ENCODE measurements at regions of chr11 and their contacts with region 1.

Region 1: GRCh38 chr11:119728651-119729580 is at the start of gene NECTIN1:
- DNase-seq: peak; percentile 89
- H3K4me3 ChIP-seq: peak within 1 kb of the TSS; percentile 53 to 68 (median 65)
- H3K27ac ChIP-seq: peak within 1 kb of the TSS; percentile 40
- H3K4me1 ChIP-seq: peaks cover 35% of the 10 kb centered on the region
- H3K27me3 ChIP-seq: no peaks in the 10 kb centered on the region
- CTCF ChIP-seq: peak; percentile 87 to 91
- POLR2A ChIP-seq: peak; percentile 84
- total RNA-seq, gene NECTIN1: 23.6 and 23.9 TPM in 2 replicates

Region 2: GRCh38 chr11:119481021-119481666 is 247.8 kb before region 1 on chr11:
- CTCF ChIA-PET with region 1: interaction called, 11 read pairs
- POLR2A ChIA-PET with region 1: no interaction called
- dilution Hi-C with region 1: no loop called
- intact Hi-C with region 1: loop called (anchors 1 kb)
- DNase-seq: peak; percentile 60
- H3K4me3 ChIP-seq: no peak overlapping the region
- H3K27ac ChIP-seq: no peak overlapping the region
- H3K4me1 ChIP-seq: no peaks in the 10 kb centered on the region
- H3K27me3 ChIP-seq: no peaks in the 10 kb centered on the region
- CTCF ChIP-seq: peak; percentile 96 to 98
- POLR2A ChIP-seq: no peak

Region 3: GRCh38 chr11:119641983-119642745 is 86.8 kb before region 1 on chr11:
- CTCF ChIA-PET with region 1: interaction called, 16 read pairs
- POLR2A ChIA-PET with region 1: interaction called, 3 read pairs
- dilution Hi-C with region 1: no loop called
- intact Hi-C with region 1: loop called (anchors 1 kb)
- DNase-seq: peak; percentile 13
- H3K4me3 ChIP-seq: no peak overlapping the region
- H3K27ac ChIP-seq: no peak overlapping the region
- H3K4me1 ChIP-seq: no peaks in the 10 kb centered on the region
- H3K27me3 ChIP-seq: peaks cover 0 to 2% of the 10 kb centered on the region in 2 experiments
- CTCF ChIP-seq: peak; percentile 59 to 69
- POLR2A ChIP-seq: no peak

Region 4: GRCh38 chr11:119673759-119674336 is 55.1 kb before region 1 on chr11:
- CTCF ChIA-PET with region 1: interaction called, 128 read pairs
- POLR2A ChIA-PET with region 1: interaction called, 5 read pairs
- dilution Hi-C with region 1: no loop called
- intact Hi-C with region 1: loop called (anchors 1 kb)
- DNase-seq: no peak
- H3K4me3 ChIP-seq: no peak overlapping the region
- H3K27ac ChIP-seq: no peak overlapping the region
- H3K4me1 ChIP-seq: peaks cover 26% of the 10 kb centered on the region
- H3K27me3 ChIP-seq: no peaks in the 10 kb centered on the region
- CTCF ChIP-seq: no peak
- POLR2A ChIP-seq: no peak

Region 5: GRCh38 chr11:119694334-119694733 is 34.6 kb before region 1 on chr11:
- CTCF ChIA-PET with region 1: interaction called, 22 read pairs
- POLR2A ChIA-PET with region 1: interaction called, 4 read pairs
- dilution Hi-C with region 1: no loop called
- intact Hi-C with region 1: no loop called
- DNase-seq: no peak
- H3K4me3 ChIP-seq: no peak overlapping the region
- H3K27ac ChIP-seq: no peak overlapping the region
- H3K4me1 ChIP-seq: no peaks in the 10 kb centered on the region
- H3K27me3 ChIP-seq: no peaks in the 10 kb centered on the region
- CTCF ChIP-seq: no peak
- POLR2A ChIP-seq: no peak

Region 6: DNA sequence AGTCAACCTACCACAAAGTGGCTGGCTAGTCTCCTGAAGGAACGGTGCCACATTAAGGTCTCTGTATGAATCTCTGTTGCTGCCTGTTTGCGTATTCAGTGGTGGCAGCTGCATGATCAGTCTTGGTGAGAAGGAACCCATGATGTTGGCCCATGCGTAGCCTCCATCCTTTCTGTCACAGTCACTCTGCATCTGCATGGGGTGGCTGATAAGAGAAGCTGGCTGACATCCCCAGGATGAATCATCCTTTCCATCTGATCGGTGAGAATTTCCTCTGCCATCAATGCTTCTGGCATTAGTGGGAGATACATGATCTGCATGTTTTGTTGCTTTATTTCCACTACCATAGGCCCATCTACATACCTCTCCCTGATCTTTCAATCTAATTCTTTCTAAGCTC is 199.1 kb after region 1 on chr11:
- CTCF ChIA-PET with region 1: no interaction called
- POLR2A ChIA-PET with region 1: no interaction called
- dilution Hi-C with region 1: no loop called
- intact Hi-C with region 1: no loop called
- DNase-seq: no peak
- H3K4me3 ChIP-seq: no peak overlapping the region
- H3K27ac ChIP-seq: no peak overlapping the region
- H3K4me1 ChIP-seq: no peaks in the 10 kb centered on the region
- H3K27me3 ChIP-seq: no peaks in the 10 kb centered on the region
- CTCF ChIP-seq: no peak
- POLR2A ChIP-seq: no peak

Region 7: DNA sequence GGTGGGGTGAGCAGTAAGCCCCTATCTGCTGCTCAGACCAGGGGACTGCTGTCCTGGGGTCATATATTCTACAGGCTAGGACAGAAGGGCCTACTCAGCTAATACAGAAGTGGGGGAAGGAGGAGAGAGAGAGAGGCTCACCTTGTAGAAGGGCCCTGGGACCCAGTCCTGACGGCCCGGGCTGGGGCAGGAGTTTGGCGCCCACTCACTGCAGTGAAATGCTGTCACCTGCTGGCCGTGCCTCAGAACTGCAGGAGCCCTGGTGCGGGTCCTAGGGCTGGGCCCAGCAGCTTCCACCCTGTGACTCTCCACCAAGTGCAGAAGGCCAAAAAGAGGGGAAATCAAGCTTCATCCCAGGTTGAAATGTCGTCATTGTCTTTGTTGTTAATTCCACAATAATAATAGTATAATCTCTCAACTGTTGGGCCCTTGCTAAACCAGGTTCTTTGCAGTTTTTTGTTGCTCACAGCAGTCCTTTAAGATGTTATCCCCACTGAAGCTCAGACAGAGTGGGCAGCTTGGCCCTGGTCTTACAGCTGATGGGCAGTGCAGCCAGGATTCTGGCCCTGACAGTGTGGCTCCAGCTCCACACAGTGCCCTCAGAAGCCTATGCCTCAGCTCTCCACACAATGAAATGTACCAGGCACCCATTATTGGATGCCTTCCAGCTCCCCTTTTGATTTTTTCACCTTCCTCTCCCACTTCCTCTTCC is 379.4 kb after region 1 on chr11:
- CTCF ChIA-PET with region 1: interaction called, 11 read pairs
- POLR2A ChIA-PET with region 1: no interaction called
- dilution Hi-C with region 1: no loop called
- intact Hi-C with region 1: loop called (anchors 1 kb)
- DNase-seq: peak; percentile 42
- H3K4me3 ChIP-seq: no peak overlapping the region
- H3K27ac ChIP-seq: no peak overlapping the region
- H3K4me1 ChIP-seq: no peaks in the 10 kb centered on the region
- H3K27me3 ChIP-seq: peaks cover 0 to 2% of the 10 kb centered on the region in 2 experiments
- CTCF ChIP-seq: peak; percentile 96 to 99
- POLR2A ChIP-seq: no peak

Region 8: GRCh38 chr11:120210626-120211521 is 482.0 kb after region 1 on chr11 and contains the start of gene OAF:
- CTCF ChIA-PET with region 1: interaction called, 3 read pairs
- POLR2A ChIA-PET with region 1: no interaction called
- dilution Hi-C with region 1: no loop called
- intact Hi-C with region 1: loop called (anchors 5 kb)
- DNase-seq: peak; percentile 84
- H3K4me3 ChIP-seq: peak within 1 kb of the TSS; percentile 37 to 67 (median 60)
- H3K27ac ChIP-seq: peak within 1 kb of the TSS; percentile 47
- H3K4me1 ChIP-seq: peaks cover 40% of the 10 kb centered on the region
- H3K27me3 ChIP-seq: no peaks in the 10 kb centered on the region
- CTCF ChIP-seq: peak in 1 of 2 donors; percentile 13
- POLR2A ChIP-seq: peak; percentile 86
- total RNA-seq, gene OAF: 26.7 and 32.1 TPM in 2 replicates

Measured in endothelial cell of umbilical vein (primary cell).